Ascending aorta (tissue), 2 donors: ENCODE measurements at regions of chr21 and their contacts with region 1.

Region 1: GRCh38 chr21:37267269-37268184 is at the start of gene VPS26C:
- DNase-seq: peak; percentile 94 to 99
- H3K4me3 ChIP-seq: peak within 1 kb of the TSS; percentile 81 to 93
- H3K27ac ChIP-seq: peak within 1 kb of the TSS; percentile 97 to 98
- H3K4me1 ChIP-seq: peaks cover 0 to 18% of the 10 kb centered on the region in 2 donors
- H3K27me3 ChIP-seq: no peaks in the 10 kb centered on the region
- CTCF ChIP-seq: no peak
- total RNA-seq, gene VPS26C: 137 TPM

Region 2: GRCh38 chr21:37208056-37208721 is 59.3 kb before region 1 on chr21:
- intact Hi-C with region 1: loop called (anchors 5 kb)
- DNase-seq: peak; percentile 51 to 91
- H3K4me3 ChIP-seq: peak overlapping the region; percentile 24 to 25
- H3K27ac ChIP-seq: peak overlapping the region; percentile 50 to 69
- H3K4me1 ChIP-seq: peaks cover 4 to 21% of the 10 kb centered on the region in 2 donors
- H3K27me3 ChIP-seq: no peaks in the 10 kb centered on the region
- CTCF ChIP-seq: no peak

Region 3: DNA sequence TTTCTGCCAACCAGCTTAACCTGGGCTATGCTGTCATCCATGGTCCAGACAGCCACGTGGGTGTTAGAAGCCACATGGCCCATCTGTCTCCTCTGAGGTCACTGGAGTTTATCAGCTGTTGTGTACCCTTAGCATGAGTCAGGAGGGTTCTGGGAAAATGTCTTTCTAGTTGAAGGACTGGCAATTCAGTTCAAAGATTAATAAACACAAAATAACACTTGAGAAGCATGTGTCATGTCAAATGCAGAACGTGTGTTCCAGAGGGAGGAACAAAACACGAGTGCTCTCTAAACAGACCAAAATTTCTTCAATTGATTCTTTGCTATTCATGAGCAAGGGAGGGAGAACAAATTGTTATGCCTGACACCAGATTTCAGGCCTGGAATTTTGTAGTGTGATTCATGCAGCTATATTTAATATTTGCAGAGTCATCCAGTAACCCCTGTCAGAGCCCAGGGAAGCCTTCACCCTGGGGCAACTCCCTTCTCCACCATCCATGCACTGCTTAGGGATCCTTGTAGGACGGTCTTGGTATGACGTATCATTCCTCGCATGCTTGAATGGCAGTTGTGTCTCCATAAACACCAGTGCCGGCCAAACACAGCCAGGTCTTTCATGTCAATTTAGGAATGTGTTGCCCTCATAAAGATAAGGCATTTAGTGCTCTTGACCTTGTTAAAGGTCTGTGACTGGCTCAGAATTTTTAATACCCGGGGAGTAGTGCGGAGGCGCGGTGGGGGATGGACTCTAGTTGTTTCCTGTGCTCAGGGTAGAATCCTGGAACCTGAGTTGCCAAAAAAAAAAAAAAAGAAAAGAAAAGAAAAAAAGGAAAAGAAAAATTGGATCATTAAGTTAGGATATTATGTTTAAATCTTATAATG is 71.4 kb after region 1 on chr21:
- intact Hi-C with region 1: loop called (anchors 1 kb)
- DNase-seq: peak in 1 of 2 donors; percentile 74
- H3K4me3 ChIP-seq: no peak overlapping the region
- H3K27ac ChIP-seq: peak overlapping the region; percentile 86 to 95
- H3K4me1 ChIP-seq: peaks cover 0 to 21% of the 10 kb centered on the region in 2 donors
- H3K27me3 ChIP-seq: no peaks in the 10 kb centered on the region
- CTCF ChIP-seq: no peak

Region 4: GRCh38 chr21:37435120-37435519 is 167.6 kb after region 1 on chr21:
- intact Hi-C with region 1: loop called (anchors 5 kb)
- DNase-seq: peak; percentile 27 to 75
- H3K4me3 ChIP-seq: peak overlapping the region in 1 of 2 donors; percentile 10
- H3K27ac ChIP-seq: no peak overlapping the region
- H3K4me1 ChIP-seq: peaks cover 9 to 18% of the 10 kb centered on the region in 2 donors
- H3K27me3 ChIP-seq: no peaks in the 10 kb centered on the region
- CTCF ChIP-seq: no peak

Region 5: GRCh38 chr21:38460171-38460742 is 1192.7 kb after region 1 on chr21:
- intact Hi-C with region 1: loop called (anchors 5 kb)
- DNase-seq: peak in 1 of 2 donors; percentile 88
- H3K4me3 ChIP-seq: no peak overlapping the region
- H3K27ac ChIP-seq: peak overlapping the region; percentile 77 to 94
- H3K4me1 ChIP-seq: peaks cover 22 to 59% of the 10 kb centered on the region in 2 donors
- H3K27me3 ChIP-seq: no peaks in the 10 kb centered on the region
- CTCF ChIP-seq: no peak